ENCODE measurements at regions of chr19 and their contacts with region 1.

Region 1: GRCh38 chr19:9818734-9819589 is at the start of gene FBXL12:
- DNase-seq: peak; percentile 100
- ATAC-seq: peak; percentile 86 to 96 (median 87)
- H3K4me3 ChIP-seq: peak within 1 kb of the TSS; percentile 87
- H3K4me3 Mint-ChIP-seq: peak within 1 kb of the TSS; percentile 90
- H3K27ac ChIP-seq: peak within 1 kb of the TSS; percentile 95
- H3K27ac Mint-ChIP-seq: peak within 1 kb of the TSS; percentile 87 to 89
- H3K4me1 ChIP-seq: peaks cover 14% of the 10 kb centered on the region
- H3K4me1 Mint-ChIP-seq: peaks cover 19 to 33% of the 10 kb centered on the region in 2 donors
- H3K27me3 ChIP-seq: no peaks in the 10 kb centered on the region
- H3K27me3 Mint-ChIP-seq: no peaks in the 10 kb centered on the region
- CTCF ChIP-seq: no peak
- total RNA-seq, gene FBXL12: 36.9 to 46.8 (median 43.6) TPM

Region 2: DNA sequence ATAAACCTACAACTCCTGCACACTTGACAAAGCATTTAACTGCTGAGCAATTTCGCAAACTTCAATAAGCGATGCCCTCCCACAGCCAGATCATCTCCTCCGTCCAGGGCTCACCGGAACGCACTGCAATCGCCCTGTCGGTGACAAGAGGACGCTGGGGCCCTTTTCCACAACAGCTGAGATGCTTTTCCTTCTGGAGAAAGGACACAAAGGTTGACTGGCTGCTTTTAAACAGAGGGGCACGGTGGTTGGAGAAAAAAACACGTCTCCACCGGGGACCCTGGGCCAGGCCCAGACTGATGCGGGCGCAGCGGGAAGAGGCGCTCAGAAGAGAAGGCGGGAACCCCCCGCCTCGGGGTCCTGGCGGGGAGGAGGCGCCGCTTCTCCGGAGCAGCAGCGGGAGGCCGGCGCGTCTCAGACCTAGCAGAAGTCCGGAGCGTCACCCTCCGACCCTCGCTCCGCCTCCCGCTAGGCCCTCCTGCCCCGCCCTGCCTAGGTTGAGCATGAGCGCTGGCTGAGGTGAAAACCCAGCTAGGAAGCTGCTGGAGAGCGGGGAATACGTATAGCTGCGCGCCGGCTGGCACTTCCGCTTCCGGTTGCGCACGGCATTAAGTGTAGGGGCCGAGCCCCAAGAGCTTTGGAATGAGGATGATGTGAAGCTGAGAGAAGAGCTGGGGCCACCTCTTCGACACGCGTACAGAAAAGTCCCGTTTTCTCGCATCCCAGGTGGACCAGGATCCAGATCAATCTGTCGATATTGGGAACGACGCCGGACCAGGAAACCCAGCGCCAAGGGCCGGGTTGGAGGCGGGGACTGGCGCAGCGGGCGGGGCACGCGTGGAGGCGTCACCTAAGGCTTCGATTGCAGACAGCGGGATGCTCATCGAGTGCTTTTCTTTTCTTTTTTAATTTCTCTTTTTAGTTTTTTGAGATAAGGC is 50.5 kb before region 1 on chr19 and contains the start of gene ZNF846:
- intact Hi-C with region 1: loop called (anchors 1 kb)
- DNase-seq: peak; percentile 87 to 96
- ATAC-seq: peak; percentile 91 to 97 (median 93)
- H3K4me3 ChIP-seq: peak within 1 kb of the TSS; percentile 91
- H3K4me3 Mint-ChIP-seq: peak within 1 kb of the TSS; percentile 96
- H3K27ac ChIP-seq: peak within 1 kb of the TSS; percentile 92
- H3K27ac Mint-ChIP-seq: peak within 1 kb of the TSS; percentile 96 to 97
- H3K4me1 ChIP-seq: peaks cover 16% of the 10 kb centered on the region
- H3K4me1 Mint-ChIP-seq: peaks cover 5% of the 10 kb centered on the region in 2 donors
- H3K27me3 ChIP-seq: no peaks in the 10 kb centered on the region
- H3K27me3 Mint-ChIP-seq: no peaks in the 10 kb centered on the region
- CTCF ChIP-seq: no peak
- total RNA-seq, gene ZNF846: 9.8 to 15.6 (median 12.8) TPM

Region 3: GRCh38 chr19:9785367-9786331 is 33.3 kb before region 1 on chr19:
- intact Hi-C with region 1: loop called (anchors 2 kb)
- DNase-seq: peak; percentile 86 to 98
- ATAC-seq: peak; percentile 81 to 93 (median 81)
- H3K4me3 ChIP-seq: peak overlapping the region; percentile 86
- H3K4me3 Mint-ChIP-seq: peak overlapping the region; percentile 93
- H3K27ac ChIP-seq: peak overlapping the region; percentile 98
- H3K27ac Mint-ChIP-seq: peak overlapping the region; percentile 93 to 95
- H3K4me1 ChIP-seq: peaks cover 14% of the 10 kb centered on the region
- H3K4me1 Mint-ChIP-seq: peaks cover 7 to 36% of the 10 kb centered on the region in 2 donors
- H3K27me3 ChIP-seq: no peaks in the 10 kb centered on the region
- H3K27me3 Mint-ChIP-seq: no peaks in the 10 kb centered on the region
- CTCF ChIP-seq: no peak

Region 4: DNA sequence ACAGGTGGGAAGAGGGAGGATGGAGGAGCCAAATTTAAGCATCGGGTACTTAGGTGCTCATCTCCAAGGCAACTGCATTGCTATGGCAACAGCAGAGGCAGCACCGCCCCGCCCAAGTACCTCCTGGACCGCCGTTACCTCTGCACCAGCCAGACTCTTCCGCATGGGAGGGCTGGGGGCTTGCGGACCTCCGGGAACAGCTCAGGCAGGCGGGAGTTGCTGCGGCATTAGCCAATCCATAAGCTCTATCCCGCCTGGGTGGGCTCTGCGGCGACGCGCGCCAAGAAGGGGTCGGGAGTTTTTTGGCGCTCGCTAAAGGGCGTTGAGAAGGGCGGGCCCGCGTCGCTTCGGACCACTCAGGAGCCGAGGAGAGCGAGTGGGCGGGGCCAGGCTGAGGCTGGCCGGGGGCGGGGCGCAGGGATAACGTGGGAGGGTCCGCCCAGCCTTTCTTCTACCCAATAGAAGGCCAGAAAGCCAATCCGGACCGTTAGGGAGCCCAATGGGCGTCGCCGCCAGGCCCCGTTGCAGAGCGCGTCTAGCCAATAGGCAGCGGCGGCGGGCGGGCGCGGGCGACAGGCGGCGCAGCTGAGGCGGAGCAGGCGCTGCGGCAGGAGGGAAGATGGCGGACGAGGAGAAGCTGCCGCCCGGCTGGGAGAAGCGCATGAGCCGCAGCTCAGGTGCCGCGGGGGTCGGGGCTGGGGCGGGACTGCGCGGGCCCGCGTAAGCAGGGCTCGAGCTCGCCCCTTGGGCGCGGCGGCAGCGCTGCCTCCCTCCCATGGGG is 16.0 kb after region 1 on chr19 and contains the start of gene PIN1:
- intact Hi-C with region 1: loop called (anchors 1 kb)
- DNase-seq: peak; percentile 99
- ATAC-seq: peak; percentile 95 to 99 (median 96)
- H3K4me3 ChIP-seq: peak within 1 kb of the TSS; percentile 59
- H3K4me3 Mint-ChIP-seq: peak within 1 kb of the TSS; percentile 85
- H3K27ac ChIP-seq: peak within 1 kb of the TSS; percentile 70
- H3K27ac Mint-ChIP-seq: peak within 1 kb of the TSS; percentile 85 to 89
- H3K4me1 ChIP-seq: peaks cover 17% of the 10 kb centered on the region
- H3K4me1 Mint-ChIP-seq: peaks cover 12 to 22% of the 10 kb centered on the region in 2 donors
- H3K27me3 ChIP-seq: no peaks in the 10 kb centered on the region
- H3K27me3 Mint-ChIP-seq: no peaks in the 10 kb centered on the region
- CTCF ChIP-seq: peak; percentile 21
- total RNA-seq, gene PIN1: 68.3 to 82.6 (median 74.8) TPM

Region 5: GRCh38 chr19:9857920-9858746 is 39.2 kb after region 1 on chr19:
- intact Hi-C with region 1: no loop called
- DNase-seq: peak in 1 of 2 donors; percentile 76
- ATAC-seq: peak; percentile 43 to 73 (median 55)
- H3K4me3 ChIP-seq: no peak overlapping the region
- H3K4me3 Mint-ChIP-seq: peak overlapping the region; percentile 88
- H3K27ac ChIP-seq: peak overlapping the region; percentile 71
- H3K27ac Mint-ChIP-seq: peak overlapping the region; percentile 90 to 92
- H3K4me1 ChIP-seq: peaks cover 35% of the 10 kb centered on the region
- H3K4me1 Mint-ChIP-seq: peaks cover 34 to 52% of the 10 kb centered on the region in 2 donors
- H3K27me3 ChIP-seq: no peaks in the 10 kb centered on the region
- H3K27me3 Mint-ChIP-seq: no peaks in the 10 kb centered on the region
- CTCF ChIP-seq: no peak